IMR-90 (cell line): ENCODE measurements at regions of chr9 and their contacts with region 1.

Region 1: DNA sequence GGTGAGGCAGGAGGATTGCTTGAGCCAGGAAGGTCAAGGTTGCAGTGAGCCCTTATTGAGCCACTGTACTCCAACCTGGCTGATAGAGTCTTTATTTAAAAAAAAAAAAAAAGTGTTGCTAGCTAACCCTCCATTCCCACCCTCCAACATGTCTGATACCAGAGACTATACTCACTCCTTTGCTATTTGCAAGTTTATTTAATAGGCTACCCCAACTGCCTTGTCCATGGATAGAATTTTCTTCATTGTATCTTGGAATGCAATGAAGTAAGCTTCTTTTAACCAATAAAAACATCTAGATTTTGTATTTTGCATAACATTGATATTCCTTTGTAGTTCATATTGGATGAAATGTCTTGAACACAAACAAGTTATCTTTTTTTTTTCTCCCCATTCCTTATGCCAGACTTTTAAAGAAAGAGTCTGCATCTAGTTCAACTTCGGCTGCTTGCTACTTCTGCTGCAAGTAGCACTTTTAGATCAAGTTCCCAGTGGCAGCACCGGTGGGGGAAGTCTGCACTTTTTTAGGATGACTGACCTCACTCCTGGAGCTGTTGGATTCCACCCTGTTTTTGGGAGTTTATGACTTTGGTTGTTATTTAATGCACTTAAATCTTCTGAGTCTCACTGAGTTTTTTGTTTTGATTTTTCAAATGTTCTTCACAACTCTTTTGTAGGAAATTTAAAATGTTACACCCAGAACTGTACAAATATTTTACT is 112.5 kb downstream of the UHRF2 start:
- DNase-seq: peak; percentile 86
- ATAC-seq: peak; percentile 98
- H3K4me3 ChIP-seq: no peak overlapping the region
- H3K27ac ChIP-seq: peak overlapping the region; percentile 93
- H3K4me1 ChIP-seq: peaks cover 3% of the 10 kb centered on the region; the same call in 1 of the 2 replicates
- H3K27me3 ChIP-seq: no peaks in the 10 kb centered on the region
- CTCF ChIP-seq: no peak
- POLR2A ChIP-seq: no peak
- RAD21 ChIP-seq: no peak

Region 2: DNA sequence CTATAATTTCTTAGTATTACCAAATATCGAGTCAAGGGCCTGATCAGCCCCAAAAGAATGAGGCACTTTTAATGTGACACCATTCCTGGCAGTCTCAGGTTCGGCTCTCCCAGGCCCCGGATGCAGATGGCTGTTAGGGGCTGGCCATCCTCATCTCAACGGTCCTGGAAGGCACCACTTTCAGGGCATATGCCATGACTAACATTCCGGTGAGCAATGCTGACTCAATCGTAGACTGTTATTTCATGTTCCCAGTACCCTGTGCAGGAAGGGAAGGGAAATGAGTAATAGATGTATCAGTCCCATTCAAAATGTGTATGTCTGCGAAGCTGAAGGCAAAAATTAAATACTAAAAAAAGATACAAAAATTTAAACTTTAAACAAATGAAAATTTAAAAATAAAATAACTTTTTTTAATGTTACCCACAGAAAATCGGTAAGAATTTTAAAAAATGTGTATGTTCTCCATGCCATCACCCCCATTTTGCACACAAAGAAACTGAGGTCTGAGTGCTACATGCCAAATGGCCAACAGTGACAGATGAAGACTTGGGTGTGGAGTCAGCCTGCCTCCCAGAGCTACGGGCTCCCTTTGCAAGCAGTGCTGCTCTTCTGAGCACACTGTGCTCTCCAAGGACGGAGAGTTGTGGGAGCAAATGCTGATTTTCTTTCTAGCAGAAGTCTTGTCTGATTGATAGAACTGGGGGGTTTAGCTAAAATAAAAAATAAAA is 41.1 kb after region 1 on chr9:
- CTCF ChIA-PET with region 1: no interaction called
- POLR2A ChIA-PET with region 1: no interaction called
- dilution Hi-C with region 1: no loop called
- in situ Hi-C with region 1: no loop called
- intact Hi-C with region 1: loop called (anchors 2 kb)
- DNase-seq: peak; percentile 99
- ATAC-seq: peak; percentile 85
- H3K4me3 ChIP-seq: peak overlapping the region; percentile 38; the same call in 1 of the 2 replicates
- H3K27ac ChIP-seq: peak overlapping the region; percentile 98
- H3K4me1 ChIP-seq: peaks cover 12% of the 10 kb centered on the region
- H3K27me3 ChIP-seq: no peaks in the 10 kb centered on the region
- CTCF ChIP-seq: no peak
- POLR2A ChIP-seq: peak; percentile 52; the same call in 1 of the 2 replicates
- RAD21 ChIP-seq: 0 out of 2 replicates have a peak, but pooled peaks have one; percentile 11